Naive thymus-derived CD4-positive, alpha-beta T cell (primary cell): ENCODE measurements at regions of chr12 and their contacts with region 1.

Region 1: GRCh38 chr12:29427964-29428363 is 47.0 kb upstream of the ERGIC2 start:
- DNase-seq: peak in 4 of 9 donors; percentile 6 to 28 (median 22)
- ATAC-seq: peak; percentile 76
- H3K4me3 ChIP-seq: no peak overlapping the region
- H3K4me3 Mint-ChIP-seq: no peak overlapping the region
- H3K27ac ChIP-seq: no peak overlapping the region
- H3K27ac Mint-ChIP-seq: no peak overlapping the region
- H3K4me1 ChIP-seq: no peaks in the 10 kb centered on the region
- H3K4me1 Mint-ChIP-seq: peaks cover 0 to 5% (median 0%) of the 10 kb centered on the region in 7 donors
- H3K27me3 ChIP-seq: no peaks in the 10 kb centered on the region
- H3K27me3 Mint-ChIP-seq: peaks cover 3 to 20% (median 10%) of the 10 kb centered on the region in 5 donors

Region 2: GRCh38 chr12:28569698-28570411 is 858.1 kb before region 1 on chr12:
- CTCF ChIA-PET with region 1: no interaction called
- POLR2A ChIA-PET with region 1: no interaction called
- intact Hi-C with region 1: no loop called
- DNase-seq: no peak
- ATAC-seq: no peak
- H3K4me3 ChIP-seq: no peak overlapping the region
- H3K4me3 Mint-ChIP-seq: no peak overlapping the region
- H3K27ac ChIP-seq: no peak overlapping the region
- H3K27ac Mint-ChIP-seq: no peak overlapping the region
- H3K4me1 ChIP-seq: no peaks in the 10 kb centered on the region
- H3K4me1 Mint-ChIP-seq: no peaks in the 10 kb centered on the region
- H3K27me3 ChIP-seq: no peaks in the 10 kb centered on the region
- H3K27me3 Mint-ChIP-seq: no peaks in the 10 kb centered on the region

Region 3: DNA sequence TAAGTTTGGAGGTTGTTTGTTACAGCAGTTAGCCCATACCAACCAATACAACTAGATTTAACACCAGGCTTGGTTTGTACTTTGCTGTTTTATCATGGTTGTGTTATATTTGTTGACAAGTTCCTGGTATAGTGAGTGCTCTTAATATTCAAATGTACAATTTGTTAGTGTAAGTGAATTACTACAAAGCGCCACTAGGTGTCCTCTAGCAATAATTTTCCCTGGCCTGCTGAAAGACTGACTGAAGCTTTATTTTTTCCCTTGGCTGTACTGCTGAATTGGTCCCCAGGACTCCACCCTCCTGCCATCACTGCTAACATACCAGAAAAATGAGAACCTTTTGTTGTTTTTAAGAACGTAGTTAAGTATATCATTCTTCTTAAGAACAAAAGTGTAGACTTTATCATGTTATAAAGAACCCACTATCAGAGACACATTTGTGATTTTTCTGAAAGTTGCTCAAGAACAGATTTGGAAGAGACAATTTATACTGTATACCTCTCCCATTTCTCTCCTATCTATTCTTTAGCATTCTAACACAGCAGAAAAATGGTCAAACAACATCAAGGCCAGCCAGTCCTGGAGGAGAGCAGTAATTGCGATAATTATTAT is 354.2 kb before region 1 on chr12:
- CTCF ChIA-PET with region 1: no interaction called
- POLR2A ChIA-PET with region 1: no interaction called
- intact Hi-C with region 1: loop called in 1 of 2 experiments (anchors 1 kb)
- DNase-seq: peak in 6 of 9 donors; percentile 7 to 47 (median 34)
- ATAC-seq: peak; percentile 73
- H3K4me3 ChIP-seq: no peak overlapping the region
- H3K4me3 Mint-ChIP-seq: no peak overlapping the region
- H3K27ac ChIP-seq: no peak overlapping the region
- H3K27ac Mint-ChIP-seq: peak overlapping the region in 2 of 9 donors; percentile 26 to 65
- H3K4me1 ChIP-seq: no peaks in the 10 kb centered on the region
- H3K4me1 Mint-ChIP-seq: no peaks in the 10 kb centered on the region
- H3K27me3 ChIP-seq: no peaks in the 10 kb centered on the region
- H3K27me3 Mint-ChIP-seq: peaks cover 12 to 45% (median 23%) of the 10 kb centered on the region in 5 donors

Region 4: GRCh38 chr12:29088611-29089219 is 339.2 kb before region 1 on chr12:
- CTCF ChIA-PET with region 1: interaction called, 3 read pairs
- POLR2A ChIA-PET with region 1: no interaction called
- intact Hi-C with region 1: loop called in 1 of 2 experiments (anchors 5 kb)
- DNase-seq: peak in 4 of 9 donors; percentile 26 to 36 (median 29)
- ATAC-seq: peak; percentile 49
- H3K4me3 ChIP-seq: no peak overlapping the region
- H3K4me3 Mint-ChIP-seq: no peak overlapping the region
- H3K27ac ChIP-seq: no peak overlapping the region
- H3K27ac Mint-ChIP-seq: no peak overlapping the region
- H3K4me1 ChIP-seq: no peaks in the 10 kb centered on the region
- H3K4me1 Mint-ChIP-seq: peaks cover 0 to 5% (median 3%) of the 10 kb centered on the region in 7 donors
- H3K27me3 ChIP-seq: no peaks in the 10 kb centered on the region
- H3K27me3 Mint-ChIP-seq: peaks cover 0 to 45% (median 0%) of the 10 kb centered on the region in 5 donors

Region 5: GRCh38 chr12:29309320-29309902 is 118.6 kb before region 1 on chr12:
- CTCF ChIA-PET with region 1: interaction called, 3 read pairs
- POLR2A ChIA-PET with region 1: no interaction called
- intact Hi-C with region 1: loop called in 1 of 2 experiments (anchors 1 kb)
- DNase-seq: peak in 1 of 9 donors; percentile 6
- ATAC-seq: no peak
- H3K4me3 ChIP-seq: no peak overlapping the region
- H3K4me3 Mint-ChIP-seq: no peak overlapping the region
- H3K27ac ChIP-seq: no peak overlapping the region
- H3K27ac Mint-ChIP-seq: no peak overlapping the region
- H3K4me1 ChIP-seq: no peaks in the 10 kb centered on the region
- H3K4me1 Mint-ChIP-seq: no peaks in the 10 kb centered on the region
- H3K27me3 ChIP-seq: no peaks in the 10 kb centered on the region
- H3K27me3 Mint-ChIP-seq: no peaks in the 10 kb centered on the region

Region 6: GRCh38 chr12:29350080-29350479 is 77.9 kb before region 1 on chr12:
- CTCF ChIA-PET with region 1: no interaction called
- POLR2A ChIA-PET with region 1: no interaction called
- intact Hi-C with region 1: loop called in 1 of 2 experiments (anchors 2 kb)
- DNase-seq: no peak
- ATAC-seq: no peak
- H3K4me3 ChIP-seq: no peak overlapping the region
- H3K4me3 Mint-ChIP-seq: no peak overlapping the region
- H3K27ac ChIP-seq: no peak overlapping the region
- H3K27ac Mint-ChIP-seq: no peak overlapping the region
- H3K4me1 ChIP-seq: no peaks in the 10 kb centered on the region
- H3K4me1 Mint-ChIP-seq: peaks cover 0 to 4% (median 0%) of the 10 kb centered on the region in 7 donors
- H3K27me3 ChIP-seq: no peaks in the 10 kb centered on the region
- H3K27me3 Mint-ChIP-seq: no peaks in the 10 kb centered on the region

Region 7: DNA sequence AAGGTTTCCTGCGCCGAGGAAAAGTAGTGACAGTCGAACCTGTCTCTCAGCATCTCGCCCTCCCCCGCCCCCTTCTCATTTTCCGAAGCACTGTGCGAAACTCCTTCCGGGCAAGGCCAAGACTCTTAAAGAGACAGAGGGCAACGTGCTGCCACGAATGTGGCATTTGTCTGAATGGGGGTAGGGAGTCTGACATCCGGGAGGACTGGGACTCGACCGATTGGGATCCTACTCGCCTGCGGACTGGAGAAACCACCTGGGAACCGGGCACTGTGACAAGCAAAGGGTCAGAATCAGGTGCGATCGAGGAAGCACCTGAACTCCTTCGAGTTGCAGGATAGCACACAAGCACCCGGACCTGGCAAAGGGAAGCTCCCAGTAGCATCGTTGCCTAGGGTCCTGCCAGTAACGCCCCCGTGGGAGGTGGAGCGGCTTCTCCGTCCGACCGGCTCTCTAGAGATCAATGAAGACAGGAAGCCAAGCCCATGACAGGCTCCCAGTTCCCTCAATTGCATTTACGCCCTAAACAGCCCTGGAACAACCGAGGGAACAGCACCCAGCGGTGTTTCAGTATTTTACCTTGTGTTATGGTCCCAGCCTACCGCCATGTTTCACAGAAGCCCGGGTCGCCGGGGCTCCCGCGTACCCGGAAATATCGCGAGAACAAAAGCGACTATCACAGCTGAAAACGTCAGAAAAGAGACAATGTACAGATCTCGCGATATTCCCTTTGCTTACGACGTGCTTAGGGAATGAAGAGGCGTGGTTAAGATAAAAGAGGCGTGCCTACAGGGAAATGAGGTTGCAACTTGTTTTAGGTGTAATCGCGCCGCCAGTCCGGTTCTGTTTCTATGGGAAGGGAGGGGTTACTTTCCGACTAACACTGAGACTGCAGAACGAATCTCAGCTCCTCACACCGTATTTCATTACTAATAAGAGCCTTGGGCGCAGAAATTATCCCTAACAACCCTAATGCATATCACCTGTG is 47.1 kb before region 1 on chr12 and contains the start of gene ERGIC2:
- CTCF ChIA-PET with region 1: interaction called, 3 read pairs
- POLR2A ChIA-PET with region 1: interaction called, 3 read pairs
- intact Hi-C with region 1: loop called in 1 of 2 experiments (anchors 1 kb)
- DNase-seq: peak; percentile 63 to 97 (median 95)
- ATAC-seq: peak; percentile 97
- H3K4me3 ChIP-seq: peak within 1 kb of the TSS; percentile 98
- H3K4me3 Mint-ChIP-seq: peak within 1 kb of the TSS; percentile 88 to 97 (median 94)
- H3K27ac ChIP-seq: peak within 1 kb of the TSS; percentile 91
- H3K27ac Mint-ChIP-seq: peak within 1 kb of the TSS; percentile 92 to 98 (median 96)
- H3K4me1 ChIP-seq: peaks cover 9 to 12% of the 10 kb centered on the region in 2 donors
- H3K4me1 Mint-ChIP-seq: peaks cover 20 to 63% (median 46%) of the 10 kb centered on the region in 7 donors
- H3K27me3 ChIP-seq: no peaks in the 10 kb centered on the region
- H3K27me3 Mint-ChIP-seq: no peaks in the 10 kb centered on the region
- total RNA-seq, gene ERGIC2: 36.0 to 85.7 (median 78.6) TPM

Region 8: DNA sequence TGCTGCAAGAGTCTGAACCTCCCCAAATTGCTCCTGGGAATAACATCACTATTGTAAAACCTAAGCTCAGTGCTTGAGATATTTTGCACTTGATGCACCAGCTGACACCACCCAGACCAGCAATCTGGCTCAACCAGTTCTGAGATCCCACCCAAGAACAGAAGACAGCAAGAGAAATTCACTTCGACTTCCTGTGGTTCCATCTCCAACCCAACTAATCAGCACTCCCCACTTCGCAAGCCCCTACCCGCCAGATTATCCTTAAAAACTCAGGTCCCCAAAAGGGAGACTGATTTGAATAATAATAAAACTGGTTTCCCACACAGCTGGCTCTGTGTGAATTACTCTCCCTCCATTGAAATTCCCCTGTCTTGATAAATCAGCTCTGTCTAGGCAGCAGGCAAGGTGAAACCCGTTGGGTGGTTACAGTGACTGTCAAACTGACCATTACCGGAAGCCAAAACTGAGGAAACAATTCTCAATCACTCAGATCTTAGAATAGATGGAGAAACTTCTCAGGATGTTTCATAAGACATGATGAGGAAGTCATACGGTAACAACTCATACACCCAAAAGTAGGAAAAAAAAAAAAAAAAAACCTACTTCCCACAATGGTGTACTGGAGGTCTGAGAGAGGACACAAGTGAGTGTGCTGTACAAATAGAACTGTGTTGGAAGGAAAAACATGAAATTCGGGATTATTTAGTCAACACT is 263.3 kb after region 1 on chr12:
- CTCF ChIA-PET with region 1: no interaction called
- POLR2A ChIA-PET with region 1: no interaction called
- intact Hi-C with region 1: no loop called
- DNase-seq: no peak
- ATAC-seq: peak; percentile 66
- H3K4me3 ChIP-seq: no peak overlapping the region
- H3K4me3 Mint-ChIP-seq: no peak overlapping the region
- H3K27ac ChIP-seq: no peak overlapping the region
- H3K27ac Mint-ChIP-seq: no peak overlapping the region
- H3K4me1 ChIP-seq: no peaks in the 10 kb centered on the region
- H3K4me1 Mint-ChIP-seq: peaks cover 0 to 6% (median 0%) of the 10 kb centered on the region in 7 donors
- H3K27me3 ChIP-seq: no peaks in the 10 kb centered on the region
- H3K27me3 Mint-ChIP-seq: peaks cover 0 to 31% (median 11%) of the 10 kb centered on the region in 5 donors